ENCODE measurements at regions of chr10 and their contacts with region 1.

Region 1: GRCh38 chr10:32049113-32049512 is 7.1 kb downstream of the KIF5B start:
- DNase-seq: no peak

Region 2: GRCh38 chr10:31261511-31262311 is 787.4 kb before region 1 on chr10:
- intact Hi-C with region 1: loop called in 1 of 2 experiments (anchors 5 kb)
- DNase-seq: no peak

Region 3: GRCh38 chr10:32077896-32078485 is 28.9 kb after region 1 on chr10:
- intact Hi-C with region 1: no loop called
- DNase-seq: peak; percentile 87